ENCODE measurements at regions of chr16 and their contacts with region 1.

Region 1: DNA sequence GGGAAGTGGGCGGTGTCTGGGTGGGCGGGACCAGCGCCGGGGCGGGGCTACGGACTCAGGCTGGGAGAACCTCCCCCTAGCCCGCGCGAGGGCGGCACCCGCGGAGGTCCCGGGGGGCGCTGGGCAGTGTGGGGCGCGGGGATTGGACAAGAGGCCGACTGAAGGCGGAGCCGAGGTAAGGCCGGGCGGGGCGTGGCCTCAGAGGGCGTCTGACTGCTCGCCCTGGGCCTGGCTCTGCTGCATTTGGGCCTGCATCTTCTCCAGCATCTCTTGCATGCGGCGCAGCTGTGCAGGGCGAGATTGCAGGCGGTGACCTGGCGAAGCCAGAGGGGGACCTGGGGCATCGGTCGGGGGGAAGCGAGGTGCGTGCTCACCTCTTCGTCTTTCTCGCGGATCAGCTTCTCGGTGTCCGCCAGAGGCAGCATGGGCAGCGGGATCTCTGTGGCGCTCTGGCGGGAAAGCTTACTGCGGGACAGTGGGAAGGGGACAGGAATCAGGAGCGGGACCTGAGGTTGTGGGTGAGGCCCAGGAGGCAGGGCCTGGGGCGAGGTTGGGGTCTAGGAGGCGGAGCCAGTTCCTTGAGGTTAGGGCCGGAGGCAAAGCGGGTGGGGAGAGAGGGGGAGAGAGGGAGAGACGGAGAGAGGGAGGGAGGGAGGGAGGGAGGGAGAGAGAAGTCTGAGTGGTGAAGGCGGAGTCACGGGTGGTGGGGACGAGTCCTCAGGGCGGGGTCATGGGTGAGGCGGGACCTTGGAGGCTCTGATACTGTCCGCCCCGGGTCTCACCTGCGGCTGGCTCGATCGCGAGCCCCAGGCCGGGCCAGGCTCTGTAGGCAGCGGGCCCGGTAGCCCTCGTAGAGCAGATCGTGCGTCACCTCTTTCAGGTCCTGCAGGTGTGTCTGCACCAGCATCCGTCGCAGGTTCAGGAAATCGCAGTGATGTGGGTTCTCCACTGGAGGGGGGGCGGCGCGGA is 3.8 kb downstream of the SEPTIN1 start:
- DNase-seq: peak; percentile 97 to 99
- ATAC-seq: peak; percentile 78 to 86
- H3K4me3 ChIP-seq: peak overlapping the region; percentile 65 to 93 (median 80)
- H3K27ac ChIP-seq: peak overlapping the region; percentile 95 to 100 (median 98)
- H3K4me1 ChIP-seq: peaks cover 14 to 47% of the 10 kb centered on the region in 2 donors
- H3K27me3 ChIP-seq: no peaks in the 10 kb centered on the region
- CTCF ChIP-seq: peak in 1 of 5 experiments; percentile 11
- POLR2A ChIP-seq: peak in 1 of 2 donors; percentile 3

Region 2: GRCh38 chr16:30335598-30336474 is 42.7 kb before region 1 on chr16:
- in situ Hi-C with region 1: no loop called
- intact Hi-C with region 1: loop called (anchors 2 kb)
- DNase-seq: peak; percentile 64 to 75
- ATAC-seq: peak; percentile 52 to 67
- H3K4me3 ChIP-seq: peak overlapping the region; percentile 66 to 85 (median 77)
- H3K27ac ChIP-seq: peak overlapping the region; percentile 89 to 99 (median 96)
- H3K4me1 ChIP-seq: peaks cover 5 to 32% of the 10 kb centered on the region in 2 donors
- H3K27me3 ChIP-seq: no peaks in the 10 kb centered on the region
- CTCF ChIP-seq: no peak
- POLR2A ChIP-seq: no peak

Region 3: GRCh38 chr16:30395155-30395991 is 16.9 kb after region 1 on chr16 and contains the start of gene ZNF48:
- in situ Hi-C with region 1: no loop called
- intact Hi-C with region 1: loop called (anchors 1 kb)
- DNase-seq: peak; percentile 66 to 84
- ATAC-seq: peak; percentile 83 to 88
- H3K4me3 ChIP-seq: peak within 1 kb of the TSS; percentile 75 to 86 (median 79)
- H3K27ac ChIP-seq: peak within 1 kb of the TSS; percentile 77 to 88 (median 86)
- H3K4me1 ChIP-seq: peaks cover 12 to 22% of the 10 kb centered on the region in 2 donors
- H3K27me3 ChIP-seq: no peaks in the 10 kb centered on the region
- CTCF ChIP-seq: peak in 4 of 5 experiments; percentile 65 to 81 (median 74)
- POLR2A ChIP-seq: peak; percentile 54 to 62
- total RNA-seq, gene ZNF48: 4.4 to 12.7 (median 8.7) TPM